Heart left ventricle (tissue), 16 donors: ENCODE measurements at regions of chr6 and their contacts with region 1.

Region 1: GRCh38 chr6:26270903-26271667 is 93.9 kb upstream of the BTN3A2 start:
- DNase-seq: peak in 4 of 5 donors; percentile 33 to 67 (median 62)
- ATAC-seq: peak in 3 of 4 donors; percentile 50 to 65 (median 59)
- H3K4me3 ChIP-seq: peak overlapping the region in 11 of 12 donors; percentile 10 to 66 (median 52)
- H3K27ac ChIP-seq: peak overlapping the region in 10 of 12 donors; percentile 14 to 84 (median 72)
- H3K4me1 ChIP-seq: peaks cover 0 to 28% (median 12%) of the 10 kb centered on the region in 12 donors
- H3K27me3 ChIP-seq: peaks cover 0 to 75% (median 24%) of the 10 kb centered on the region in 9 donors
- CTCF ChIP-seq: no peak
- POLR2A ChIP-seq: no peak

Region 2: GRCh38 chr6:25953733-25954132 is 317.4 kb before region 1 on chr6:
- intact Hi-C with region 1: no loop called
- DNase-seq: no peak
- ATAC-seq: peak in 2 of 4 donors; percentile 55
- H3K4me3 ChIP-seq: no peak overlapping the region
- H3K27ac ChIP-seq: no peak overlapping the region
- H3K4me1 ChIP-seq: peaks cover 0 to 3% (median 0%) of the 10 kb centered on the region in 12 donors
- H3K27me3 ChIP-seq: no peaks in the 10 kb centered on the region
- CTCF ChIP-seq: no peak
- POLR2A ChIP-seq: no peak

Region 3: DNA sequence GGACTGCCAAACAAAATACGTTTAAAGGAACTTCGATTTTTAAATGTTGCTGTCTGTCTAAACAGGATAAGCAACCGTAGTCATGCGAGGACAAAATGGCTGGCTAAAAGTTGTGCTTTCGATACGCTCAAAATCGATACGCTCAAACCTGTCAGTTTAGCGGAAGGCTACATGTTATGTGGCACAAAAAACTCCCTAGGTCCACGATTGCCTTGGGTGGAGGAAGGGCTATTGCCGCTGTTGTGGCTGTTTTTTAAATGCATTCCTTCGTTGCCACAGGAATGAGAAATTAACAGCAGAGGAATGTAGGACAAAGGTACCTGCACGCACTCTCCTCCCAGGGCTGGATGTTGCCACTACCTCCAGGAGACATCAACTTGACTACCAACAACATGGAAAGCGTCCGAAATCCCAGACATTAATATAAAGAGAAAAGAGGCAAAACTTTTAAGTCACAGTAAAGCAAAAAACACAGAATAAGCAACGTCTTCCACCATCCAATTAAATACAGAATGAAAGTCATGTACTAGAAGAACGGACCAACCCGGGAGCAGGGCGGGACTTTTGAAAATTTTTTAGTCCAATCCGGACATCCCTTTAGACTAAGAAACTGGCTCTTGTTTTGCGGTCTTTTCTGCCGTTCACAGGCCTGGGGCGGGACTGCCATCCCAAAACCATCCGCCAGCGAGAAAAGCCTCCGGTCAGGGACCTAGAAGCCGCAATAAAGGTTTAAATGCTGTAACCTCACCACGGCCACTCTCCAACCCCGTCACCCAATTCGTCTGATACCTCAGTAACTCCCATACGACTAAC is 216.0 kb before region 1 on chr6:
- intact Hi-C with region 1: loop called in 1 of 10 experiments (anchors 10 kb)
- DNase-seq: peak; percentile 80 to 92 (median 89)
- ATAC-seq: peak; percentile 79 to 89 (median 84)
- H3K4me3 ChIP-seq: peak overlapping the region; percentile 59 to 80 (median 74)
- H3K27ac ChIP-seq: peak overlapping the region; percentile 81 to 98 (median 95)
- H3K4me1 ChIP-seq: peaks cover 0 to 24% (median 10%) of the 10 kb centered on the region in 12 donors
- H3K27me3 ChIP-seq: no peaks in the 10 kb centered on the region
- CTCF ChIP-seq: peak in 2 of 12 donors; percentile 5 to 22
- POLR2A ChIP-seq: no peak

Region 4: GRCh38 chr6:26223650-26224546 is 47.2 kb before region 1 on chr6:
- intact Hi-C with region 1: loop called in 1 of 10 experiments (anchors 10 kb)
- DNase-seq: peak; percentile 46 to 72 (median 70)
- ATAC-seq: peak; percentile 89 to 95 (median 92)
- H3K4me3 ChIP-seq: peak overlapping the region; percentile 15 to 72 (median 56)
- H3K27ac ChIP-seq: peak overlapping the region; percentile 75 to 97 (median 90)
- H3K4me1 ChIP-seq: peaks cover 0 to 13% (median 1%) of the 10 kb centered on the region in 12 donors
- H3K27me3 ChIP-seq: peaks cover 0 to 40% (median 4%) of the 10 kb centered on the region in 9 donors
- CTCF ChIP-seq: no peak
- POLR2A ChIP-seq: peak in 1 of 2 donors; percentile 63

Region 5: GRCh38 chr6:26234421-26235296 is 36.4 kb before region 1 on chr6:
- intact Hi-C with region 1: loop called in 2 of 10 experiments (anchors 5 to 10 kb)
- DNase-seq: peak in 4 of 5 donors; percentile 42 to 70 (median 46)
- ATAC-seq: peak; percentile 79 to 89 (median 88)
- H3K4me3 ChIP-seq: peak overlapping the region; percentile 19 to 72 (median 51)
- H3K27ac ChIP-seq: peak overlapping the region in 11 of 12 donors; percentile 26 to 95 (median 58)
- H3K4me1 ChIP-seq: peaks cover 0 to 31% (median 8%) of the 10 kb centered on the region in 12 donors
- H3K27me3 ChIP-seq: peaks cover 0 to 85% (median 27%) of the 10 kb centered on the region in 9 donors
- CTCF ChIP-seq: no peak
- POLR2A ChIP-seq: peak in 1 of 2 donors; percentile 50

Region 6: DNA sequence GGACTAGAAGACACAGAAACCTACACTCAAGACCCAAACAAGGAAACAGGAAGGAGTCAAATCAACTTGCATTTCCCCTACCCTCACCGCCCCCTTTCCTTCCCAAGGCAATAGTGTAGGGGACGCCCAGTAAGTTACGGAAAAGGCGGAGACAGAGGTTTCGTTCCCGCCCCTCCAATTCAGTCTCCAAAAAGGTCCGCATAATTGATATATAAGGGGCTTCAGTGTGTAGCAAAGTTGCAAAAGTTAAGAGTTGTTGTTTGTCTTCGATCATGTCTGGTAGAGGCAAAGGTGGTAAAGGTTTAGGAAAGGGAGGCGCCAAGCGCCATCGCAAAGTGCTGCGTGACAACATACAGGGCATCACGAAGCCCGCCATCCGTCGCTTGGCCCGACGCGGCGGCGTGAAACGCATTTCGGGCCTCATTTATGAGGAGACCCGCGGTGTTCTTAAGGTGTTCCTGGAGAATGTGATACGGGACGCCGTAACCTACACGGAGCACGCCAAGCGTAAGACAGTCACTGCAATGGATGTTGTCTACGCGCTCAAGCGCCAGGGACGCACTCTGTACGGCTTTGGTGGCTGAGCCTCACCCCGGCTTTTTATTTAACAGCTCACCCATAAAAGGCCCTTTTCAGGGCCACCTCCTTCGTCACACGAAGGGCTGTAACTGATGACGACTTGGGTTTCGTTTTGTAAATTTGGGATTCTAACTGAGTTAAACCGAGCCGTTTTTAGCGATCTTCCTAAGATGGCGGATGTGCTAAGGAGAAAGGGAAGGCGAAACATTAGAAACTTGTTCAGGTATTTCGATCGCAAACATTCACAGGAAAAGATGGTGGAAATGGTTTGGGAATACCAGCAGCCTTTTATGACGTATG is 30.7 kb before region 1 on chr6:
- intact Hi-C with region 1: loop called in 2 of 10 experiments (anchors 5 kb)
- DNase-seq: peak; percentile 51 to 81 (median 69)
- ATAC-seq: peak; percentile 60 to 95 (median 90)
- H3K4me3 ChIP-seq: peak overlapping the region; percentile 17 to 68 (median 52)
- H3K27ac ChIP-seq: peak overlapping the region in 11 of 12 donors; percentile 58 to 92 (median 75)
- H3K4me1 ChIP-seq: peaks cover 0 to 13% (median 0%) of the 10 kb centered on the region in 12 donors
- H3K27me3 ChIP-seq: peaks cover 0 to 95% (median 46%) of the 10 kb centered on the region in 9 donors
- CTCF ChIP-seq: no peak
- POLR2A ChIP-seq: peak in 1 of 2 donors; percentile 32

Region 7: DNA sequence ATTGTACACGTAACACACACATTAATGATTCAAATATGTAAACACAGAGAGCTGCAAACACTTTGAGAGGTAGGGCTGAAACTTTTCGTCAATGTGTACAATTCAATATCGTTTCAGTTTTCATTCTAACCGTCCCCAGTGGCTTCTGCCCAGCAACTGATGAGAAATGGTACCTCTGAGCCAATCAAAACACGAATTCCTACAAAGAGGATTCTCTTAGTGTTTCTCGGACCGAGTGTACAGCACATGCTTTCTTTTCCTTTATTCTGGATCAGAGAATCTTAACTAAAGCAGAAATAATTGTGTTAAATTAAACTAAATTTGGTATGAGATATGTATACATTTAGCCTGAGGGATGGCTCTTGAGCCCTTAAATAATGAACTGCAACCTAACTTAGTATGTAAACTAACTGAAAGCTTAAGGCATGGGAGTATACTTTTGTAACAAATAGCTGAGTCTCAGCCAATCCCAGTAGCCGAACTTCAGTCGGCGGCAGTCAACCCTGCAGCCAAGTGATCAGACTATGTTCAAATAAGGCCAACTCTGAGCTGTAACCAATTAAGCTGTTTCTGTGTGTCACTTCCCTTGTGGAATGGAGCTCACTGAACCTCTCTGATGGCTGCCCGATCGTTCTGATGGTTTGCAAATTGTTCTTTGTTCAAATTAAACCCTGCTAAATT is 202.8 kb after region 1 on chr6:
- intact Hi-C with region 1: no loop called
- DNase-seq: peak; percentile 78 to 86 (median 82)
- ATAC-seq: peak; percentile 97 to 98 (median 98)
- H3K4me3 ChIP-seq: peak overlapping the region; percentile 4 to 62 (median 50)
- H3K27ac ChIP-seq: peak overlapping the region; percentile 84 to 97 (median 88)
- H3K4me1 ChIP-seq: peaks cover 0 to 51% (median 7%) of the 10 kb centered on the region in 12 donors
- H3K27me3 ChIP-seq: no peaks in the 10 kb centered on the region
- CTCF ChIP-seq: no peak
- POLR2A ChIP-seq: peak in 1 of 2 donors; percentile 71